Ascending aorta (tissue), 2 donors: ENCODE measurements at regions of chr2 and their contacts with region 1.

Region 1: GRCh38 chr2:28810384-28811285 is at the start of gene SPDYA:
- DNase-seq: peak; percentile 36 to 85
- H3K4me3 ChIP-seq: peak within 1 kb of the TSS; percentile 58 to 69
- H3K27ac ChIP-seq: peak within 1 kb of the TSS in 1 of 2 donors; percentile 55
- H3K4me1 ChIP-seq: peaks cover 11% of the 10 kb centered on the region in 2 donors
- H3K27me3 ChIP-seq: no peaks in the 10 kb centered on the region
- CTCF ChIP-seq: peak in 2 of 3 experiments; percentile 9 to 23
- total RNA-seq, gene SPDYA: 0.32 TPM

Region 2: DNA sequence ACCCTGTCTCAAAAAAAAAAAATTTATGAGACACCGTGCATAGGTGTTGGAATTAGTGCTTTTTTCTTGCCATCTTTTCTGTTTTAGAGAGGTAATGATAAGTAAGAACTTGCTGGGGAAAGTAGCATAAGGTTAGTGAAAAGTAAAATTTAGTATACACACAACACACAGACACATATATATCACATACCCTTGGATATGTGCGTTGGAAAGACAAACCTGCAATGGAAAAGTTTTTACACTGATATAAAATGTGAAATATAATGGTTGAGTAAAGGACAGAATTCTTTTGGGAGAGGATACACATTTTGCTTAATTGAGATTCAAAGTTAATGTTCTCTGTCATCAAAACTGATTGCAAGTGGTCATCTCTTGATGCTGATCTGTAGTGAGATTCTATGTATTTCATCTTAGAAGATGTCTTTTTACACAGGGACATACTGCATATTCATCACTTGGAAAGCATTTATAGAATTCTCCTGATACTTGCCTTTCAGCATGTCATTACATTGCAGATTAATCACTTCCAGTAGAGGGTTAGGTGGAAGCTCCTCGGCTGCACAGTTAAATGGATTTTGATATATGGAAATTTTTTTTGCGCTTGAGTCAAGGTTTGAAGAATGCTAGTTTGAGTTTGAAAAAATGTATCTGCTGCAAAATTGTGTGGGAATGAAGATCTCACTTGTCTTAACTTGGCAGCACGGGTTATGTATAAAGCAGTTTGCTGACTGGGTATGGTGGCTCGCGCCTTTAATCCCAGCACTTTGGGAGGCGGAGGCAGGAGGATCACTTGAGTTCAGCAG is 45.5 kb before region 1 on chr2:
- intact Hi-C with region 1: loop called (anchors 5 kb)
- DNase-seq: no peak
- H3K4me3 ChIP-seq: peak overlapping the region in 1 of 2 donors; percentile 41
- H3K27ac ChIP-seq: no peak overlapping the region
- H3K4me1 ChIP-seq: peaks cover 22 to 76% of the 10 kb centered on the region in 2 donors
- H3K27me3 ChIP-seq: no peaks in the 10 kb centered on the region
- CTCF ChIP-seq: no peak